ENCODE measurements at regions of chr1 and their contacts with region 1.

Region 1: DNA sequence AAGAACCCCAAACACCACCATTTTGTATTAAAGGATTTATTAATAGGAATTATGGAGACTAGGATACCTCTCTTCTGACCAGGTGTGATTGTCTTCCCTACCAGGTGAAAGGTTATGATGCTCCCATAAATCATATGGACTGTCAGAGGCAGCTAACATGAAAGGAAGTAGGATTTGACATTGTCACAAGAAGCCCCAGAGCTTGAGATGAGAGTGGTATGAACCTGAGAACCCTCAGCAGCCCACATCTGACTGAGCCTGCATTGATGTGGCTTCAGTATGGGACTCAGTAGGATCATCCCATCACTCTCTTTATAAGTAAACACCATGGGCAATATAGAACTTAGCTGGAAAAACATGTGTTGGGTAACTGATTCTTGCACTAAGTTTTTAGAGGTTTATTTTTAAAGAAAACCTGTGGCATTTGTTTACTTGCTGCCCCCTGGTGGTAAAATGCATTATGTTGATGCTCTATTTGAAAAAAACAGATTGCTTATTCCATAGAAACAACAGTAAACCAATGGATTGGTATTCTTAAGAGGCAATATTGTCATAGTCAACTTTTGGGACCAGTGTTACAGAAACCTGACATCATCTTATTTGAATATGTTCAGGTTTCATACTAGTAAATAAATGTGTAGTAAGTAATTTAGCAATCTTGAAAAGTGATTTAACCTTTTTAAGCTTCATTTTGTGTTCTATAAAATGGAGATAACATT is 16.6 kb upstream of the CACYBP start:
- DNase-seq: no peak
- ATAC-seq: peak in 2 of 4 donors; percentile 18 to 23
- H3K4me3 ChIP-seq: no peak overlapping the region
- H3K27ac ChIP-seq: no peak overlapping the region
- H3K4me1 ChIP-seq: no peaks in the 10 kb centered on the region
- H3K27me3 ChIP-seq: no peaks in the 10 kb centered on the region
- CTCF ChIP-seq: peak in 3 of 4 donors; percentile 32 to 53 (median 48)

Region 2: GRCh38 chr1:174769961-174770549 is 213.1 kb before region 1 on chr1:
- intact Hi-C with region 1: loop called in 1 of 3 experiments (anchors 10 kb)
- DNase-seq: no peak
- ATAC-seq: peak in 3 of 4 donors; percentile 74 to 83 (median 76)
- H3K4me3 ChIP-seq: no peak overlapping the region
- H3K27ac ChIP-seq: no peak overlapping the region
- H3K4me1 ChIP-seq: peaks cover 0 to 3% (median 0%) of the 10 kb centered on the region in 3 donors
- H3K27me3 ChIP-seq: no peaks in the 10 kb centered on the region
- CTCF ChIP-seq: peak; percentile 36 to 63 (median 58)

Region 3: DNA sequence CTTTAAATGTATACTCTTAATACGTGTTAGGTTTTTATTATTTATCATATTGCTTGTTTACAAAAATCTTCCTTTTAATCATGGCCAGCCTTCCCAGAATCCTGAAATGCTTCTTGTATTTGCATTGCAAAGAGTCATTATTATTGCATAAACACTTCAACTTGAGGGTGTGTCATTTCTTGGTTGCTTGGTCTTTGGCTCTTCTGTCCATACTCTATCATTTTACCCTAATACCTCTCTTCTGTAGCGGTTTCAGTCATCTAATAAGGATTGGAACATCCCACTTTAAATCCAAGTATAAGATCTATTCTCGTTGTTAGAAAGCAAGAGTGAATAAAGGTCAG is 184.0 kb before region 1 on chr1:
- intact Hi-C with region 1: loop called in 1 of 3 experiments (anchors 10 kb)
- DNase-seq: no peak
- ATAC-seq: no peak
- H3K4me3 ChIP-seq: peak overlapping the region in 2 of 4 donors; percentile 31 to 42
- H3K27ac ChIP-seq: peak overlapping the region in 1 of 4 donors; percentile 9
- H3K4me1 ChIP-seq: no peaks in the 10 kb centered on the region
- H3K27me3 ChIP-seq: no peaks in the 10 kb centered on the region
- CTCF ChIP-seq: no peak

Region 4: GRCh38 chr1:174815036-174815435 is 168.1 kb before region 1 on chr1:
- intact Hi-C with region 1: no loop called
- DNase-seq: no peak
- ATAC-seq: no peak
- H3K4me3 ChIP-seq: no peak overlapping the region
- H3K27ac ChIP-seq: no peak overlapping the region
- H3K4me1 ChIP-seq: no peaks in the 10 kb centered on the region
- H3K27me3 ChIP-seq: no peaks in the 10 kb centered on the region
- CTCF ChIP-seq: no peak

Region 5: DNA sequence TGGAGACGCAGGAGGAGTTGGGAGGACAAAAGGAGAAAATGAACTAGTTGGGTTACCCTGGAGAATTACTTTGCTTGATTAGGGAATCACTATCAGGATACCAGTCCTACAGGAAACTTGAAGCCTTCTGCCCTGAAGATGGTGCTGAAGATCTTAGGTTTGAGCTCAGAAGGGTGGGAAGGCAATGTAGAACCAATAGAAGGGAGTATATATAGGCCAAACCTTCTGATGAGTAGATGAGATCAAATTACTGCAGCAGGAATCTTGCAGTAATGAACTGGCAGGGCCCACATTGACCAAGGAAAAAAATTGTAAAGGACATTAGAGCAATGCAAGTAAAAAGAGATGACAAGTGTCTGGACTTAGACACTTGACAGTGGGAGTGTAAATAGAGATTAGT is 99.7 kb before region 1 on chr1:
- intact Hi-C with region 1: loop called in 1 of 3 experiments (anchors 10 kb)
- DNase-seq: no peak
- ATAC-seq: peak in 3 of 4 donors; percentile 44 to 63 (median 56)
- H3K4me3 ChIP-seq: peak overlapping the region in 1 of 4 donors; percentile 1
- H3K27ac ChIP-seq: no peak overlapping the region
- H3K4me1 ChIP-seq: peaks cover 6 to 29% (median 10%) of the 10 kb centered on the region in 3 donors
- H3K27me3 ChIP-seq: no peaks in the 10 kb centered on the region
- CTCF ChIP-seq: no peak